CD14-positive monocyte (primary cell): ENCODE measurements at regions of chr19 and their contacts with region 1.

Region 1: DNA sequence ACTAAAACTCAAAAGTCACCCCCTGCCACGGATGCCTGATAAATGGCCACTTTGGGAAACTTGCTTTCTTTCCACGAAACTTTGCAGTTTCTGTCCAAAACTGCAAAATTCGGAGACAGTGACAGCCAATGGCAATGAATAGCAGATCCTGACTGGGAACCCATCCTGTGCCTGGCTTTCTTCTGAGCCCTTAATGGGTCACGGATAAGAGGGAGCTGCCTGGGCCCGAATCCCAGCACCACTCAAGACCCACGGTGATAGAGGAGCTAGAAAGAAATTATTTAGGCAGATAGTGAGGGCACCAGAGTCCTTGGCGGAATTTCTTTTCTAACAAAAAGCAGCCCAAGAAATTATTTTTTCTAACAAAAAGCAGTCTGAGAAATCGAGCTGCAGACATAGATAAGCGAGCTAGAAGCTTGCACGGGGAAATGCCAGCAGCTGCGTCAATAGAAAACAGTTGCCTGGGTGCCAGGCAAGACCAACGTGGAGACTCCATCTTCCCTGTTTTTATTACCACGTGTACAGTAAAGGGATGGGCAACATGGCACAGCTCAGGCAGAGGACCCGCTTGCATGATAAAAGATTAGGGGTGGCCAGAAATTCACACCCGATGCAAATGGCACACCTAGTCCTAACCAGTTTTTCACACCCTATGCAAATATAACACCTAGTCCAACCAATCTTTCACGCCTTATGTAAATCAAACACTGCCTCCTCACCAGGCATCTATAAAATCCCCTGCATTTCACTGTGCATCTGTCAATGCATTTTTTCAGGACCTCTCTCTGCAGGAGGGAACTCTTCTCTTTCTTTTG is 7.1 kb upstream of the HSH2D start:
- DNase-seq: no peak
- H3K4me3 ChIP-seq: no peak overlapping the region
- H3K4me3 Mint-ChIP-seq: no peak overlapping the region
- H3K27ac ChIP-seq: peak overlapping the region in 1 of 2 donors; percentile 43
- H3K27ac Mint-ChIP-seq: peak overlapping the region in 4 of 7 donors; percentile 8 to 77 (median 48)
- H3K4me1 ChIP-seq: peaks cover 36 to 71% of the 10 kb centered on the region in 2 donors
- H3K4me1 Mint-ChIP-seq: peaks cover 66% of the 10 kb centered on the region
- H3K27me3 ChIP-seq: no peaks in the 10 kb centered on the region
- H3K27me3 Mint-ChIP-seq: peaks cover 0 to 3% (median under 1%) of the 10 kb centered on the region in 3 donors
- CTCF ChIP-seq: no peak

Region 2: DNA sequence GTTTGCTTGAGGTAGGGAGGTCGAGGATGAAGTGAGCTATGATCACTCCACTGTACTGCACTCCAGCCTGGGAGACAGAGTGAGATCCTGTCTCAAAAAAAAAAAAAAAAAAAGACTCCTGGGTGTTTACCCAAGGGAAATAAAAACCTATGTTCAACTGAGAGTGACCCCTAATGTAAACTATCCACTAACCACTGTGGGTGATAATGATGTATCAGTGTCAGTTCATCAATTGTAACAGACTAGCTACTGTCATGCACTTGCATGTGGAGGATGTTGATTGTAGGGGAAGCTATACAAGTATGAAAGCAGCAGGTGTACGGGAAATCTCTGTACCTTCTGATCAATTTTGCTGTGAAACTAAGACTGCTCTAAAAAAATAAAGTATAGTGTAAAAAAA is 39.6 kb after region 1 on chr19:
- intact Hi-C with region 1: loop called in 1 of 2 experiments (anchors 5 kb)
- DNase-seq: no peak
- H3K4me3 ChIP-seq: no peak overlapping the region
- H3K4me3 Mint-ChIP-seq: no peak overlapping the region
- H3K27ac ChIP-seq: no peak overlapping the region
- H3K27ac Mint-ChIP-seq: no peak overlapping the region
- H3K4me1 ChIP-seq: peaks cover 7 to 16% of the 10 kb centered on the region in 2 donors
- H3K4me1 Mint-ChIP-seq: peaks cover 15% of the 10 kb centered on the region
- H3K27me3 ChIP-seq: no peaks in the 10 kb centered on the region
- H3K27me3 Mint-ChIP-seq: peaks cover 0 to 2% (median 2%) of the 10 kb centered on the region in 3 donors
- CTCF ChIP-seq: no peak